Sigmoid colon (tissue), 7 donors: ENCODE measurements at regions of chr7 and their contacts with region 1.

Region 1: GRCh38 chr7:42831718-42832431 is 80.0 kb downstream of the C7orf25 start:
- DNase-seq: peak; percentile 80
- H3K4me3 ChIP-seq: no peak overlapping the region
- H3K27ac ChIP-seq: peak overlapping the region in 3 of 4 donors; percentile 40 to 69 (median 65)
- H3K4me1 ChIP-seq: peaks cover 0 to 26% (median 20%) of the 10 kb centered on the region in 4 donors
- H3K27me3 ChIP-seq: no peaks in the 10 kb centered on the region
- CTCF ChIP-seq: peak; percentile 55 to 76 (median 72)
- EP300 ChIP-seq: no peak
- POLR2A ChIP-seq: no peak

Region 2: GRCh38 chr7:42493436-42494238 is 338.2 kb before region 1 on chr7:
- intact Hi-C with region 1: loop called (anchors 10 kb)
- DNase-seq: peak; percentile 94
- H3K4me3 ChIP-seq: peak overlapping the region; percentile 41 to 59 (median 54)
- H3K27ac ChIP-seq: peak overlapping the region; percentile 69 to 92 (median 88)
- H3K4me1 ChIP-seq: peaks cover 0 to 63% (median 46%) of the 10 kb centered on the region in 4 donors
- H3K27me3 ChIP-seq: no peaks in the 10 kb centered on the region
- CTCF ChIP-seq: no peak
- EP300 ChIP-seq: peak in 3 of 4 donors; percentile 51 to 86 (median 83)
- POLR2A ChIP-seq: no peak